ENCODE measurements at regions of chr10 and their contacts with region 1.

Region 1: GRCh38 chr10:56116684-56117083 is 244.4 kb downstream of the ZWINT start:
- DNase-seq: no peak
- ATAC-seq: peak; percentile 73
- H3K4me3 Mint-ChIP-seq: no peak overlapping the region
- H3K27ac Mint-ChIP-seq: no peak overlapping the region
- H3K4me1 Mint-ChIP-seq: no peaks in the 10 kb centered on the region
- H3K27me3 Mint-ChIP-seq: no peaks in the 10 kb centered on the region
- CTCF ChIP-seq: no peak

Region 2: DNA sequence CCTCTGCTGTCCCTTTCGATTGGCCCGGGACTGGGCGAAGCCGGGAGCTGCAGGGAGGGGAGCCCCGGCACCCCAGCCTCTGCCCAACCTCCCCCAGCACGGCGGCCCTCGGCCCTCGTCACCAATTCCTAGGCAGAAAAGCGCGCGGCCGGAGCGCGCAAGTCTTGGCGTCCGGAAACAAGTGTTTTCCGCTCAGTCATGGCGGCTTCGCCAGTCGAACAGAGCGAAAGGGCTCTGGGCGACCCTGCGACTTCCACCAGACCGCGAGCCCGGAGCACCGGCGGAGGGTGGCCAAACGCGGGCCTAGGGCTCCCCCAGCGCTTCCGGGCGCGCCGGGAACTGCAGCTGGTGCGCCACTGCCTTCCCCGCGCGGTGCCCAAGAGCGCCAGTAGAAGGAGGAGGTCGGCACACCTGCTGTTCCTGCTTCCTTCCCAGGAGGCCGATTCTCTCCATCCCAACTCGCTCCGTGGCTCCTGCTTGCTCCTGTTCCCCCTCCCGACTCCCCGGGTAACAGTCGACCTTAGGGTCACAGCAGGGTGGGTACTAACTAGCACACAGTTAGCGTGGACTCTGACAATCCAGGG is 485.5 kb before region 1 on chr10:
- CTCF ChIA-PET with region 1: interaction called, 19 read pairs
- POLR2A ChIA-PET with region 1: no interaction called
- DNase-seq: peak; percentile 87
- ATAC-seq: peak; percentile 84
- H3K4me3 Mint-ChIP-seq: peak overlapping the region; percentile 87
- H3K27ac Mint-ChIP-seq: no peak overlapping the region
- H3K4me1 Mint-ChIP-seq: peaks cover 11% of the 10 kb centered on the region
- H3K27me3 Mint-ChIP-seq: no peaks in the 10 kb centered on the region
- CTCF ChIP-seq: peak; percentile 79

Region 3: DNA sequence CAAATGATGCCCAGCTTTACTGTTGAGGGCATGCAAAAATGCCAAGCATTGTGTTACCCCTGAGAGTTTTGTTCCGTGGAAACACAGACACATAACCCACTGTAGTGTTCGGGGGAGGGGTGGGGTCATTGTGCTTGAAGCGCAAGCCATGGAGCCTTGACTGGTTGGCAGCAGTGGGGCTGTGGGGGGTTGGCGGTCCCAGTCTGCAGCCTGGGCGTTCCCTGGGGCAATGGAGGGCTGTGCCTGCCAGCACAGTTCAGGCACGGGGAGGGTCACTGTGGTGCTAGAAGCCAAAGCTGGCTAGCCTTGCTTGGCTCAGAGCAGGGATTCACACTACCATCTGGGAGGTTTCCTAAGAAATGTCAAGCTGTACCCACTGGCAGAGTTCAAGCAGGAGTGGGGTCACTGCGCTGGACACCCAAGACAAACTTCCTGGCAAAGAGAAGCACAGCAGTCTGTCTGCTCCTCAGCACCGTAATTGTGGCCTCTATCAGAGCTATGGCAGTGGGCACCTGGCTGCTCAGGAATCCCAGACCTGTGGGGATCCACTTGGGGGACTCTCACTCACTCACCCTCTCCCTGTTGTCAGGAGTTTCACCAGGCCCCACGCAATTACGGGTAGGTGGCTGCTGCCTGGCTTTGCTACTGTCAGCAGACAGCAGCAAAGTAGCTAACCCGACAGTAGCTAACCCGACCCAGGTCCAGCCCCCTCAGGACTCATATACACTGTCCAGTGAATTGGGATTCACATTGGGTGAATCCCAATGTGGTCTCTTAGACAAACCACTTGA is 48.0 kb before region 1 on chr10:
- CTCF ChIA-PET with region 1: no interaction called
- POLR2A ChIA-PET with region 1: no interaction called
- DNase-seq: no peak
- ATAC-seq: no peak
- H3K4me3 Mint-ChIP-seq: no peak overlapping the region
- H3K27ac Mint-ChIP-seq: no peak overlapping the region
- H3K4me1 Mint-ChIP-seq: no peaks in the 10 kb centered on the region
- H3K27me3 Mint-ChIP-seq: no peaks in the 10 kb centered on the region
- CTCF ChIP-seq: no peak

Region 4: GRCh38 chr10:56487746-56488145 is 371.1 kb after region 1 on chr10:
- CTCF ChIA-PET with region 1: no interaction called
- POLR2A ChIA-PET with region 1: no interaction called
- DNase-seq: no peak
- ATAC-seq: no peak
- H3K4me3 Mint-ChIP-seq: no peak overlapping the region
- H3K27ac Mint-ChIP-seq: no peak overlapping the region
- H3K4me1 Mint-ChIP-seq: no peaks in the 10 kb centered on the region
- H3K27me3 Mint-ChIP-seq: no peaks in the 10 kb centered on the region
- CTCF ChIP-seq: no peak